CD14-positive monocyte (primary cell): ENCODE measurements at regions of chr10 and their contacts with region 1.

Region 1: DNA sequence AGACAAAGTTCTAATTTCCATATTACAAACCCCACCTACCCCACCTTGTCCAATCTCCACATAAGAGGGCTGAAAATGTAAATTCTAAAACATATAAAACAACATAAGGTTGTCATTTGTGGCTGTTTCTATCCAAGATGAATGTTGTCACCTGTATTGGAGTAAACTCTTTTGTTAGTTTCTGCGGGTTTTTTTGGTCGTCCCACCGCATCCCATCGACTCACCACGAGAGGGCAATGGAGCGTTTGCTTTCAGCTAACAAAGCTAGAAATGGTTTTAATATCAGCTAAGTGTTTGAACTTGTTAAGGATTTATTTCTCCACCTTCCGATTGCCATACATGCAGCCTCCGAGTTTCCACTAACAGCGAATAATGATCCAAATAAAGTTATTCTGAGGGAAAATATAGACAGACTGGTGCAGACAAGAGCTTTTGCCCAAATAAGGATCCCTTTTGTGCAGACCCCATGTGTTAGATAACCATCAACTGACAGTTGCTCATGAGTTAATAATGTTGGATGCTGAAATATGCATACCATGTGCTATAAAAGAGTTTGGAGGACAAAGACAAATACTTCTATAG is 137.2 kb downstream of the ARID5B start:
- DNase-seq: peak; percentile 56 to 70 (median 65)
- H3K4me3 ChIP-seq: peak overlapping the region in 1 of 3 experiments; percentile 42
- H3K4me3 Mint-ChIP-seq: peak overlapping the region in 1 of 2 donors; percentile 68
- H3K27ac ChIP-seq: peak overlapping the region in 1 of 2 donors; percentile 24
- H3K27ac Mint-ChIP-seq: peak overlapping the region in 4 of 7 donors; percentile 48 to 77 (median 66)
- H3K4me1 ChIP-seq: peaks cover 14 to 23% of the 10 kb centered on the region in 2 donors
- H3K4me1 Mint-ChIP-seq: peaks cover 27% of the 10 kb centered on the region
- H3K27me3 ChIP-seq: no peaks in the 10 kb centered on the region
- H3K27me3 Mint-ChIP-seq: peaks cover 0 to 2% (median 0%) of the 10 kb centered on the region in 3 donors
- CTCF ChIP-seq: peak; percentile 87

Region 2: GRCh38 chr10:61974601-61975390 is 63.9 kb before region 1 on chr10:
- intact Hi-C with region 1: loop called in 1 of 2 experiments (anchors 10 kb)
- DNase-seq: peak in 1 of 3 donors; percentile 10
- H3K4me3 ChIP-seq: no peak overlapping the region
- H3K4me3 Mint-ChIP-seq: no peak overlapping the region
- H3K27ac ChIP-seq: no peak overlapping the region
- H3K27ac Mint-ChIP-seq: peak overlapping the region in 6 of 7 donors; percentile 24 to 71 (median 48)
- H3K4me1 ChIP-seq: peaks cover 14 to 19% of the 10 kb centered on the region in 2 donors
- H3K4me1 Mint-ChIP-seq: peaks cover 24% of the 10 kb centered on the region
- H3K27me3 ChIP-seq: no peaks in the 10 kb centered on the region
- H3K27me3 Mint-ChIP-seq: no peaks in the 10 kb centered on the region
- CTCF ChIP-seq: no peak